ENCODE measurements at regions of chr2 and their contacts with region 1.

Region 1: DNA sequence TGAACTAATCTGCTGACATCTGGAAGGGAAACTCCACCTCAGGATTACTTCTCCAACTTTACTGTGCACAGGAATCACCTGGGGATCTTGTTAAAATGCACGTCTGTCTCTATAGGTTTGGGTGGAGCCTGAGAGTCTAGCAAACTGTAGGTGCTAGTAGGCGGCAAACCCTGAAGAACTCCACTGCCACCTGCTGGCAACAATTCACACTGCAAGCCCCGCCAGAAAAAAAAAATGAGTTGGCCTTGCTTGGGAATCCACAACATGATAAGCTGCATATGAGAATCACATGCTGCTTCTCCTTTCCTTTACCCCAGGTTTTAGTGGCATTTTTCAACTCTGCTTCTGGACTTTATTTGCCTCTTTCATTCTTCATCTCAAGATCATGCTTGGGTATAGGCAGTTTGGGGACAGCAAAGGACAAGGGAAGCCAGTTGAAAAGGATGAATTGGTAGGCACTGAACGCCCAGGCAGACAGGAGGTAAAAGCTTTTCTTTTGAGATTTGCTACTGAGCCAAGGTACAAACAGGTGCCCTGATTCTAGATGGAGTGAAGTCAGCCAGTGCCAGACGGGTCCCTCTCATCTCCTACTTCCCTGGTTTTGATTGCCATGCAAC is 88.8 kb downstream of the VIT start:
- DNase-seq: peak; percentile 13 to 77 (median 52)
- ATAC-seq: peak; percentile 84
- H3K4me3 ChIP-seq: no peak overlapping the region
- H3K4me3 Mint-ChIP-seq: no peak overlapping the region
- H3K27ac ChIP-seq: no peak overlapping the region
- H3K27ac Mint-ChIP-seq: no peak overlapping the region
- H3K4me1 ChIP-seq: no peaks in the 10 kb centered on the region
- H3K4me1 Mint-ChIP-seq: peaks cover 4% of the 10 kb centered on the region
- H3K27me3 ChIP-seq: peaks cover 0 to 3% of the 10 kb centered on the region in 2 experiments
- H3K27me3 Mint-ChIP-seq: no peaks in the 10 kb centered on the region
- CTCF ChIP-seq: peak; percentile 98

Region 2: DNA sequence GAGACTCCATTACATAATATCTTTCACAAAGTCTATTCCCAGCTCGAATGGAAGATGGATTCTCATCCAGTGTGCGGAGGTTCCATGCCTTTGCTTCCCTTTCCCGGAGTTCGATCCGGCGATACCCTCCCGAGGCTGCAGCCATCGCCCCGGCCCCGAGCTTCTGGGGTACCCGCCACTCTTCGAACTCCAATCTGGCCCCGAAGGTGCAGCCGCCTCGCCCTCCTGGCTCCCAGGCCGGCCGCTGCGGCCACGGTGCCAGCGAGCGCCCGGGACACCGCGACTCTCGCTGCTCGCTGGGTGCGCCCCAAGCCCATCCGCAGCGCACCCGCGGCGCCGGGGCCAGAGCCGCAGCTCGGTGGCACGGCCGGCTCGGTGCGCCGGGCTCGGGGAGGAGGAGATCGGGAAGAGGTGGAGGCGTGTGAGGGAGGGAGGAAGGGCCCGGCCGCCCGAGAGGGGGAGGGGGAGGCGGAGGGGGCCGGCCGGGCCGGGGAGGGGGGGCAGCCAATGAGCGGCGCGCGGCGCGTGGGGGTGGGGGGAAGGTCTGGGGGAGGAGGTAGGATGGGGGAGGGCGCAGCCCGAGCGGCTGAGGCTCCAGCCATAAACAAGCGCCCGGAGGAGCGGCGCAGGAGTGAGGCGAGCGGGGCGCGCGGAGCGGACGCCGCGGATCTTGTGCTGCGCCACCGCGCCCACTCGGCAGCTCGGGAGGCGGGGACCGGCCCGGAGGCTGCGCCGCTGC is 430.0 kb before region 1 on chr2 and contains the start of gene CRIM1:
- CTCF ChIA-PET with region 1: interaction called, 3 read pairs
- POLR2A ChIA-PET with region 1: no interaction called
- intact Hi-C with region 1: loop called (anchors 2 to 5 kb)
- DNase-seq: peak in 12 of 14 experiments; percentile 2 to 73 (median 40)
- ATAC-seq: no peak
- H3K4me3 ChIP-seq: peak within 1 kb of the TSS; percentile 58
- H3K4me3 Mint-ChIP-seq: peak within 1 kb of the TSS; percentile 87
- H3K27ac ChIP-seq: no peak within 1 kb of the TSS
- H3K27ac Mint-ChIP-seq: no peak within 1 kb of the TSS
- H3K4me1 ChIP-seq: peaks cover 25% of the 10 kb centered on the region
- H3K4me1 Mint-ChIP-seq: peaks cover 31% of the 10 kb centered on the region
- H3K27me3 ChIP-seq: peaks cover 19 to 32% of the 10 kb centered on the region in 2 experiments
- H3K27me3 Mint-ChIP-seq: peaks cover 41% of the 10 kb centered on the region
- CTCF ChIP-seq: no peak
- total RNA-seq, gene CRIM1: 1.1 to 1.7 TPM

Region 3: DNA sequence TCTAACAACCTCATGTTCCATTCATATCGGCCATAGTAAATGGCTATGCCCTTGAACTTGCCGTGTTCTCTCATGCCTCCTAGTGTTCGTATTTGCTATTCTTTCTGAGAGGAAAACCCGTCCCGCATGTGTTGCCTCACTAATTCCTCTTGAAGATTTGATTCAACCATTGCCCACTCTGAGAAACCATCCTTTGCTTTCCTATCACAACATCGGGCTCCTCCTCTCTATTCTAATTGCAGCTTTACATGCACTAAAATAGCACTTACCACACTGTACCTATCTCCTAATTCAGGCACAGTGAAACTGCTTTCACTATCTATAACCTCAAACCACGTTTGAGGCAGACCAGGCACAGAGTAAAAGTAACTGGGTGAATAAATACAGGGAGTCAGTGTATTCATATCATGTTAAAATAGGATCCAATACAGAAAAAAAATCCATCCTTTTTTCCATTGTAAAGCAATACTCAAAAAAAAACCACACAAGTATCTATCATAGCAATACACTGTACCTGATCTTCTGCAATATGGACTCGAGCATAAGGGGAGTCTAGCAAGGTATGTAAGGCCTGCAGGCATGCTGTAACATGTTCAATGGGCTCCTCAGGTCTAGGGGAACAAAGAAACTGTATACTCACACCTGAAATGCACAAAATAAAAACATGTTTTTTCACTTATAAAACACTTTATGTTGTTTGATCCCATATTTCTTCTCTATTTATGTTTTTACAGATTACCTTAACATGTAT is 220.0 kb after region 1 on chr2:
- CTCF ChIA-PET with region 1: no interaction called
- POLR2A ChIA-PET with region 1: no interaction called
- intact Hi-C with region 1: loop called (anchors 1 kb)
- DNase-seq: peak in 4 of 14 experiments; percentile 18 to 45 (median 36)
- ATAC-seq: peak; percentile 84
- H3K4me3 ChIP-seq: no peak overlapping the region
- H3K4me3 Mint-ChIP-seq: peak overlapping the region; percentile 64
- H3K27ac ChIP-seq: no peak overlapping the region
- H3K27ac Mint-ChIP-seq: peak overlapping the region; percentile 50
- H3K4me1 ChIP-seq: no peaks in the 10 kb centered on the region
- H3K4me1 Mint-ChIP-seq: peaks cover 14% of the 10 kb centered on the region
- H3K27me3 ChIP-seq: no peaks in the 10 kb centered on the region
- H3K27me3 Mint-ChIP-seq: no peaks in the 10 kb centered on the region
- CTCF ChIP-seq: peak; percentile 50

Region 4: DNA sequence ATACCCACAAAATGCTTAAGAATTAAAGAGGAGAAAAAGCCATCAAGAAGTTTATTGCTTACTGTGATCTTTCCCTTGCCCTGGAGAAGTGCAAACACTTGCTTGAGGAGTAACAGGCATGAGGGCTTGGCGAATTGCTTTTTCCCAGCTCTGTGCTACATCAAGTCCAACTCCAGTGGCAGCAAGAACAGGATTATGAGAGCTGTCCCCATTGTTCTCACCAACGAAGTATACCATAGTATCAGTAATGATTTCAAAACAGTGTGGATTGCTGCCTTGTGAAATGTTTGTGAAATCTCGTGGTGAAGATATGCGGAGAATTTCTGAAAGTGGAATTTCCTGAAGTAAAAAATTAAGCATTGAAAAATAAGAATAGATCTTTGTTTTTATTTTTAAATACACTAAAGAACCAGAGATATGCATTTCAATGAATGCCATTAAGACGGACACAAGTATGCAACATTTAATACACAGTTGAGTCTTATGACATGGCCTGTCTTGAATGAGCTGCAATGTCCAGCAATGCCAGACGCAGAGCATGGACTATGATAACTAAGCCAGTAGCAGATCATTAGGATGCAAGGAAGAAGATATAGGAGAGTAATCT is 489.2 kb after region 1 on chr2:
- CTCF ChIA-PET with region 1: no interaction called
- POLR2A ChIA-PET with region 1: no interaction called
- intact Hi-C with region 1: no loop called
- DNase-seq: no peak
- ATAC-seq: no peak
- H3K4me3 ChIP-seq: no peak overlapping the region
- H3K4me3 Mint-ChIP-seq: no peak overlapping the region
- H3K27ac ChIP-seq: no peak overlapping the region
- H3K27ac Mint-ChIP-seq: no peak overlapping the region
- H3K4me1 ChIP-seq: no peaks in the 10 kb centered on the region
- H3K4me1 Mint-ChIP-seq: no peaks in the 10 kb centered on the region
- H3K27me3 ChIP-seq: no peaks in the 10 kb centered on the region
- H3K27me3 Mint-ChIP-seq: no peaks in the 10 kb centered on the region
- CTCF ChIP-seq: no peak

Region 5: GRCh38 chr2:37877457-37878315 is 1092.4 kb after region 1 on chr2:
- CTCF ChIA-PET with region 1: no interaction called
- POLR2A ChIA-PET with region 1: no interaction called
- intact Hi-C with region 1: loop called (anchors 2 to 5 kb)
- DNase-seq: peak in 5 of 14 experiments; percentile 26 to 78 (median 71)
- ATAC-seq: peak; percentile 70
- H3K4me3 ChIP-seq: no peak overlapping the region
- H3K4me3 Mint-ChIP-seq: no peak overlapping the region
- H3K27ac ChIP-seq: no peak overlapping the region
- H3K27ac Mint-ChIP-seq: no peak overlapping the region
- H3K4me1 ChIP-seq: no peaks in the 10 kb centered on the region
- H3K4me1 Mint-ChIP-seq: no peaks in the 10 kb centered on the region
- H3K27me3 ChIP-seq: peaks cover 0 to 4% of the 10 kb centered on the region in 2 experiments
- H3K27me3 Mint-ChIP-seq: peaks cover 15% of the 10 kb centered on the region
- CTCF ChIP-seq: peak; percentile 90

Region 6: DNA sequence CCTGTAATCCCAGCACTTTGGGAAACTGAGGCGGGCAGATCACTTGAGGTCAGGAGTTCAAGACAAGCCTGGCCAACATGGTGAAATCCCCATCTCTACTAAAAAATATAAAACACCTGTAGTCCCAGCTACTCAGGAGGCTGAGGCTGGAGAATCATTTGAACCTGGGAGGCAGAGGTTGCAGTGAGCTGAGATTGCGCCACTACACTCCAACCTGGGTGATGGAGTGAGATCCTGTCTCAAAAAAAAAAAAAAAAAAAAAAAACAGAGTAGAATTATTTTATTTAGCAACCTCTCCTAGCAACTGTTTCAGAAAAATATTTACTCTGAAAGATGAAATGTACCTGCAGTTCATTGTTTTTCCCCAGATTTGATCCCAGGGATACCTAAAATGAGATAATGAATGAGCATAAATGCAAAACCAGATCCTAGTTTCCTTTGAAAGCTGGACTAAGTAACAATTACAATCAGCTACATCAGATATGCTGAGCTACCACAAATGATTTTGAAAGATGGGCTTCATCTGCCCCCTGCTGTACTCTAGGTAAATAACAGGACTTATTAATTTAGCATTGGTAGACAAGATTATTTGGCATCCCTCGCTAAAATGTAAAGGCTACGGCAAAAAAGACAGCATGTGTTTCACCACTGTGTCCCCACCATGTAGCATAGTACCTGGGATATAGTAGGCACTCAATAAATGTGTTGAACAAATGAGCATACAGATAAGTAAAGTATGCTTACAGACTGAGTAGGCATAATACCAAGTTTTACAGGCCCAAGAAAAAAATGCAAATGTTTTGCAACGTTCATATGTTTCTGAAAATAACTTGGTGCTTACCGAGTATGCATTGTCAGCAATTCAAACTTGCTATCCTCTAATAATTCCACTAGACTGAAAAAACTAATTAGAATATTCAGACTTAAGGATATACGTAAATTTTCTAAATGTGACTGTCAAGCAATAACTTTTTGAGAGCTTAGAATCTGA is 1489.3 kb after region 1 on chr2:
- CTCF ChIA-PET with region 1: no interaction called
- POLR2A ChIA-PET with region 1: no interaction called
- intact Hi-C with region 1: loop called (anchors 10 kb)
- DNase-seq: peak in 6 of 14 experiments; percentile 9 to 71 (median 47)
- ATAC-seq: peak; percentile 57
- H3K4me3 ChIP-seq: no peak overlapping the region
- H3K4me3 Mint-ChIP-seq: no peak overlapping the region
- H3K27ac ChIP-seq: no peak overlapping the region
- H3K27ac Mint-ChIP-seq: no peak overlapping the region
- H3K4me1 ChIP-seq: no peaks in the 10 kb centered on the region
- H3K4me1 Mint-ChIP-seq: no peaks in the 10 kb centered on the region
- H3K27me3 ChIP-seq: no peaks in the 10 kb centered on the region
- H3K27me3 Mint-ChIP-seq: no peaks in the 10 kb centered on the region
- CTCF ChIP-seq: peak; percentile 57

Measured in CD4-positive, alpha-beta T cell (primary cell).